ENCODE measurements at regions of chr9 and their contacts with region 1.

Region 1: DNA sequence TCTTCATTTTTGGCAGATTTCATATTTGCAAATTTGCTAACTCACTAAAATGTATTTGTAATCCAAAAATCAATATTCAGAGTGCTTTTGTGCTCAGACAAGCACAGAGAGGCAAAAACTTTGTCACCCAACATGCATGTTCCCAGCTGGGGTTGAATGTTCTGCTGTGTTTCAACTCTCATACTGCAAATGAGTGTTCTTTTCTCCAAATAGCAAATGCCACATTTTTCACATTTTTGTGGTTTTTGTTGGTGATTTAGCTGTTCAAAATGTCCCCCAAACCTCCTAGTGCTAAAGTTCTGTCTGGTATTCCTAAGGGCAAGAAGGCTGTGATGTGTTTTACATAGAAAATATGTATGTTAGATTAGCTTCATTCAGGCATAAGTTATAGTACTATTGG is 87.3 kb upstream of the PCSK5 start:
- DNase-seq: no peak
- H3K4me3 ChIP-seq: no peak overlapping the region
- H3K27ac ChIP-seq: no peak overlapping the region
- H3K4me1 ChIP-seq: no peaks in the 10 kb centered on the region
- H3K27me3 ChIP-seq: no peaks in the 10 kb centered on the region
- CTCF ChIP-seq: no peak
- EP300 ChIP-seq: no peak
- POLR2A ChIP-seq: no peak

Region 2: DNA sequence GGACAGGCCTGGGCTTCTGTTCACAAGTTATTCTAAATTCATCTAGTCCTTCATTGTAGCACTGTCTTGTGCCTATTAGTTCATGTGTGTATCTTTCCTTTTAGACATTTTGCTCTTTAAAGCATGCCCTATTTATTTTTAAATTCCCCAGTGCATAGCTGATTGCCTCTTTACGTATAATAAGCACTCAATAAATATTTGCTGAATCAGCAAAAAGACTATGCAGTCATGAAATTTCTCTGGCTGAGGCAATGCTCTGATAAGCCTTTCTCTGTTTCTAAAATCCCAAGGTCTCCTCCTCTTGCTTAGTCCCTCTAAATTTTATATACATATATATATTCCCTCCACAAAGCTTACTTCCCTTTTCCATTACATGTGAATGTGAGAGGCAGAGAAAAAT is 228.6 kb before region 1 on chr9:
- in situ Hi-C with region 1: no loop called
- intact Hi-C with region 1: no loop called
- DNase-seq: no peak
- H3K4me3 ChIP-seq: no peak overlapping the region
- H3K27ac ChIP-seq: no peak overlapping the region
- H3K4me1 ChIP-seq: peaks cover 0 to 13% (median 5%) of the 10 kb centered on the region in 4 donors
- H3K27me3 ChIP-seq: no peaks in the 10 kb centered on the region
- CTCF ChIP-seq: no peak
- EP300 ChIP-seq: no peak
- POLR2A ChIP-seq: no peak

Region 3: GRCh38 chr9:75712700-75713099 is 90.4 kb before region 1 on chr9:
- in situ Hi-C with region 1: loop called in 1 of 4 experiments (anchors 25 kb)
- intact Hi-C with region 1: no loop called
- DNase-seq: no peak
- H3K4me3 ChIP-seq: no peak overlapping the region
- H3K27ac ChIP-seq: no peak overlapping the region
- H3K4me1 ChIP-seq: no peaks in the 10 kb centered on the region
- H3K27me3 ChIP-seq: no peaks in the 10 kb centered on the region
- CTCF ChIP-seq: no peak
- EP300 ChIP-seq: no peak
- POLR2A ChIP-seq: no peak

Measured in transverse colon (tissue), 4 donors.